WTC11 (cell line): ENCODE measurements at regions of chr1 and their contacts with region 1.

Region 1: DNA sequence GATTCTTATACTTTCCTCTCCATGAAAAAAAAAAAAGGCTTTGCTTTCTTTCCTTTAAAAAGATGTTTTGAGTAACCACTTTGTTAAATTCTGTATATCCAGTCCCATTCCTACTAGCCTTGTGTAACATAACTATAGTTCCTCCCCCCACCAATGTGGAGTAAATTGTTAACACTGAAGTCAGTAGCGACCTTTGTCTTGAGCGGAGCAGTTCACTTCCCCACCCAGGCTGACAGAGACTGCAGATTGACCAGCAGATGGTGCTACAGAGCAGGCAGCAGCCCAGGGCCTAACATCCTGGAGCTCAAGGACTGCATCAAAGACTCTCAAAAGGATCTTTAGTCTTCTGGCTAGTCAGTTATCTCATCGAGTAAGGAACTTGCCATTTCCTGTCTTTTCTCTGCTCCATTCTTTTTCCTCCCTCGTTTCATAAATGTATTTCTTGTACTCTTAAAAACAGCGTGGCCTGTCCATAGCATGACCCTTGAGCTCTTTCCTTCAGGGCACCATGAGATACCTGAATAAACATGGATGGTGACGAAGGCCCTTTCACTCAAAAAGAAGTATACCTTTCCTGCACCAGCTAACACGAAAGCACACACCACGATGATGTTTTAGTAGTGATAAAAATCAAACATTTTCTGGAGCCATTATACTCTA is 503.5 kb upstream of the PKN2 start:
- DNase-seq: peak; percentile 81
- ATAC-seq: peak; percentile 100
- H3K4me3 Mint-ChIP-seq: no peak overlapping the region
- H3K27ac Mint-ChIP-seq: no peak overlapping the region
- H3K4me1 Mint-ChIP-seq: peaks cover 20% of the 10 kb centered on the region
- H3K27me3 Mint-ChIP-seq: no peaks in the 10 kb centered on the region
- CTCF ChIP-seq: peak; percentile 80

Region 2: DNA sequence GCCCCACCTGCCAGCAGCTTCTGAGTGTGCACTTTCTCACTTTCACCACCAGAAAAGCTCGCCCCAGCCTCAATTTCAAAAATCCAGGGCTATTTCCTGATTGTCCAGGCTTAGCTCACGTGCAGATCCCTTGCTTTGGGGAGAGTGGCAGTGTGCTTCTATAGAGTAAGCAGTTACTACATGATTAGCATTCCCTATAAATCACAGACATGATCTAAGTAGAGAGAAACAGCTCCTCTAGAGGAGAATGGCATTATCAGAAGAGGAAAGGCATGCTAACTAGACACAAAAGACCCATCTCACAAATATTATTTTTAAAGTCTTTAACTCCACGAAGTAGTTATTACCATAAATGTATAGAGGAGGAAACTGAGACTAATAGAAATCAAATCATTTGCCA is 47.6 kb after region 1 on chr1:
- CTCF ChIA-PET with region 1: interaction called, 15 read pairs
- POLR2A ChIA-PET with region 1: no interaction called
- DNase-seq: no peak
- ATAC-seq: peak; percentile 71
- H3K4me3 Mint-ChIP-seq: no peak overlapping the region
- H3K27ac Mint-ChIP-seq: no peak overlapping the region
- H3K4me1 Mint-ChIP-seq: no peaks in the 10 kb centered on the region
- H3K27me3 Mint-ChIP-seq: no peaks in the 10 kb centered on the region
- CTCF ChIP-seq: no peak

Region 3: GRCh38 chr1:88291611-88292354 is 111.2 kb after region 1 on chr1:
- CTCF ChIA-PET with region 1: interaction called, 11 read pairs
- POLR2A ChIA-PET with region 1: no interaction called
- DNase-seq: no peak
- ATAC-seq: no peak
- H3K4me3 Mint-ChIP-seq: no peak overlapping the region
- H3K27ac Mint-ChIP-seq: no peak overlapping the region
- H3K4me1 Mint-ChIP-seq: peaks cover 22% of the 10 kb centered on the region
- H3K27me3 Mint-ChIP-seq: no peaks in the 10 kb centered on the region; the same call in 1 of the 2 replicates
- CTCF ChIP-seq: no peak

Region 4: DNA sequence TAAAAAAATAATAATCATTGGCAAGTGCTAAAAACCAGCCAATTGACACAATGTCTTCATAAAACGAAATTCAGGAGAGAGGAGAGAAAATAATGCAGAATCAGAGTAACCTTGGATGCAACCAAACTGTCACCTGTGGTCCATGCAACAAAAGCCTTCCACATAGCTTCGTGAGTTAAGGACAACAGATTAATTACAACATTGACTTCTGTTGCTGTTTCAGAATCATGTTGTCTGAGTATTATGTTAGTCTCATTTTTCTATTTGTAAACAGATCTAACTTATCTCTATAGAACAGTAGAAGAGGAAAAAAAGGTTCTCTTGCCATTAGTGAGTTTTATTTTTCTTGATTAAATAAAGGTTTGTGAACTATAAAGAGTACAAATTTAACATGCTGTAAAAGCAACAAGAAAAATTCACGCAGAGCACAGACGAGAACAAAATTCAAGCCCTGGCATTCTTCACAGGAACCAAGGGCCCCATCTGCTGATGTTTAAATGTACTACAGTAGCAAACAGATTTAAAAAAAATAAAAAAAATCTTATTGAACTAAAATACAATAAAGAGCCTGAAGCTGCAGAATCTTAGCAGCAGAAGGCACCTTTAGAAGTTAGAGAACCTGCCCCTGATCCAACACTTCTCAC is 122.4 kb after region 1 on chr1:
- CTCF ChIA-PET with region 1: interaction called, 15 read pairs
- POLR2A ChIA-PET with region 1: no interaction called
- DNase-seq: no peak
- ATAC-seq: peak; percentile 75
- H3K4me3 Mint-ChIP-seq: no peak overlapping the region
- H3K27ac Mint-ChIP-seq: no peak overlapping the region
- H3K4me1 Mint-ChIP-seq: peaks cover 12% of the 10 kb centered on the region
- H3K27me3 Mint-ChIP-seq: no peaks in the 10 kb centered on the region; the same call in 1 of the 2 replicates
- CTCF ChIP-seq: no peak

Region 5: DNA sequence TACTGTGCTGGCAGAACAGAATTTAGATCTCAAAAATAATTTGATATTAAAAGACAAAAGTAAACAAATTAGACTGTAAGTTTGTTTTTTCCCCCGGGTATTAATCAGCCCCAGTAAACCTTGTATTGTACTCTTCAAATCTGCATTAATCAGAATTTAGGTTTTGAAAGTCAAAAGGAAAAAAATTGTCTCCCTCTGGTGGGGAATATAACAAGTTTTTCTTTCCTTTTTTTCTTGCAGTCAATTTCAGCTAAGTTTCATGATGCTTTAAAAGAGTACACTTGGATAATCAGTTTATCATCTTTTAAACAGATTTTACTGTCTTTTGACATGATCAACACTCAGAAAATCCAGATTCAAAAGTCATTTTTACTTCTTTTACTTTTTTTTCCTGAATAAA is 369.0 kb after region 1 on chr1:
- CTCF ChIA-PET with region 1: interaction called, 10 read pairs
- POLR2A ChIA-PET with region 1: no interaction called
- DNase-seq: no peak
- ATAC-seq: no peak
- H3K4me3 Mint-ChIP-seq: no peak overlapping the region
- H3K27ac Mint-ChIP-seq: no peak overlapping the region
- H3K4me1 Mint-ChIP-seq: no peaks in the 10 kb centered on the region
- H3K27me3 Mint-ChIP-seq: no peaks in the 10 kb centered on the region
- CTCF ChIP-seq: no peak